Activated T-helper 1 cell treated with anti-CD3 and anti-CD28 coated beads, Interleukin-12 subunit alpha, Interleukin-12 subunit beta, Interleukin-2, Interleukin-4 antibody, amounts not matched to agents 30 ng/mL and 10 ng/mL and 1 ng/mL, durations not matched to agents 14 hours and 24 hours and 36 hours (primary cell): ENCODE measurements at regions of chr16 and their contacts with region 1.

Region 1: DNA sequence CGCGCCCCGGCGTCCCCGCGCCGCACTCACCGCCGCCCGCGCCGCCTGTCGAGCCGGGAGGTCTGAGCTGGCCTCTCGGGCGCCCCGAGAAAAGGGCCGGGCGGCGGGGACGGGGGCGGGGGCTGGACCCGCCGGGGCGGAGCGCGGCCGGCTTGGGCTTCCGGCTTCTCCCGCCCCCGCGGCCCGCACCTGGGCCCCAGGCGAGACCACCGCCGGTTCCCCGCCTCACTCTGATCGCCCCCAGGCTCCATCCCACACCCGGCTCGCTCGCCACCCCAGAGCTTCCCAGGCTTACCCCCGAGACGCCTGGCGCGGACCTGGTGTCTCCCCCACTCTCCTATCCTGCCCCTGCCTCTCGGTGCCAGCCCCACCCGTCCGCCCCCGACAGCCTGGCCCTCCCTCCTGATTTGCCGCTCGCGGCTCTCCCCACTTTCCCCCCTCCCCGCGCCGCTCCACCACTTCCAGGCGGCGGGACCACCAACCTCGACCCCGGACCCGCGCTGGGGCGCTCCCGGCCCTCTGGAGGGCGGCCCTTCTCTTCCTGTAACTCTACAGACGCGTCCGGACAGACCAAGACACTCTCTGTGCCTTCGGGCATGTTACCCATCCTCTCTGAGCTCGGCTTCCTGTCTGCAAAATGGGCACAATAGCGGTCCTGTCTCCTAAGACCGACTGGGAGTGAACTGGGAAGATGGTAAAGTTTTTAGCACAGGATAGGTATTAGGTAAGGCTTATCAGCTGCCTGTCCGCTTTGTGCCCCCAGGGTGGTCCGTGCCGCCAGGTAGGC is at the start of gene LITAF:
- DNase-seq: peak; percentile 45
- H3K4me3 Mint-ChIP-seq: peak within 1 kb of the TSS; percentile 93
- H3K27ac Mint-ChIP-seq: peak within 1 kb of the TSS; percentile 92
- H3K4me1 Mint-ChIP-seq: peaks cover 38% of the 10 kb centered on the region
- H3K27me3 Mint-ChIP-seq: no peaks in the 10 kb centered on the region
- total RNA-seq, gene LITAF: 197 and 199 TPM in 2 replicates

Region 2: DNA sequence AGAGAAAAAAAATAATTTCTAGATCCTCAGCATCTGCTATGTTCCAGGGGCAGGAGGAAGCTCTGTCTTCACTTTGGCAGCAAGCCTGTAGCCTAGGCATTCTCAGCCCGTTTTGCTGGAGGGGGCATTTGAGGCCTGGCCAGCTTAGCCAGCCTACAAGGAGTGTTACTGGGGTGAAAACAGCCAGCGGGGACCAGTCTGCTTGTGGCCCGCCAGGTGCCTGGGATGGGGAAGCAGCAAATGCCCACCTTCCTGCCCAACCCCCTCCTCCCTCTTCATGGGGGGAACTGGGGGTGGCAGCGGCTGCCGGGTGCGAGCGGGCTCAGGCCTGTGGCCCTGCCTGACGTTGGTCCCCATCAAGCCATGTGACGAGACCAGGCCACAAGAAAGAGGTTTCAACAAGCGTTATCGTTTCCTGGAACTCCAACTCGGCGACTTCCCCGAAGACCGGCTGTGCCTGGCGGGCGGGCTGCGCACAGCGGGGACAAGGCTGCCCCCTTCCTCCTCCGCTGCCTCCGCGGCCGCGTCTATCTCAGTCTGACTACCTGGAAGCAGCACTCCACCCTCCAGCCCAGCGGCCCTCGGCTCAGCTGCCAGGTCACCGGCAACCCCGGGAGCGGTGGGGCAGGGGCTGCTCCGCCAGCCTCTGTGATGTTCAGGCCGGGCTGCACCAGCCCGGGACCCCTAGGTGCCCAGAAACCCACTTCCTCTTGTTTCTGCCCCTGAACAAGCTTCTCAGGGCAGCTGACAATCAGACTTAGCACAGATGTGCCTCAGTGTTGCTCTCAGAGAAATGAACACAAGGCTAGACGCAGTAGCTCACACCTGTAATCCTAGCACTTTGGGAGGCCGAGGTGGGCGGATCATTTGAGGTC is 354.0 kb before region 1 on chr16:
- intact Hi-C with region 1: loop called (anchors 5 kb)
- DNase-seq: peak; percentile 91
- H3K4me3 Mint-ChIP-seq: peak overlapping the region; percentile 59
- H3K27ac Mint-ChIP-seq: peak overlapping the region; percentile 95
- H3K4me1 Mint-ChIP-seq: peaks cover 89% of the 10 kb centered on the region
- H3K27me3 Mint-ChIP-seq: no peaks in the 10 kb centered on the region

Region 3: DNA sequence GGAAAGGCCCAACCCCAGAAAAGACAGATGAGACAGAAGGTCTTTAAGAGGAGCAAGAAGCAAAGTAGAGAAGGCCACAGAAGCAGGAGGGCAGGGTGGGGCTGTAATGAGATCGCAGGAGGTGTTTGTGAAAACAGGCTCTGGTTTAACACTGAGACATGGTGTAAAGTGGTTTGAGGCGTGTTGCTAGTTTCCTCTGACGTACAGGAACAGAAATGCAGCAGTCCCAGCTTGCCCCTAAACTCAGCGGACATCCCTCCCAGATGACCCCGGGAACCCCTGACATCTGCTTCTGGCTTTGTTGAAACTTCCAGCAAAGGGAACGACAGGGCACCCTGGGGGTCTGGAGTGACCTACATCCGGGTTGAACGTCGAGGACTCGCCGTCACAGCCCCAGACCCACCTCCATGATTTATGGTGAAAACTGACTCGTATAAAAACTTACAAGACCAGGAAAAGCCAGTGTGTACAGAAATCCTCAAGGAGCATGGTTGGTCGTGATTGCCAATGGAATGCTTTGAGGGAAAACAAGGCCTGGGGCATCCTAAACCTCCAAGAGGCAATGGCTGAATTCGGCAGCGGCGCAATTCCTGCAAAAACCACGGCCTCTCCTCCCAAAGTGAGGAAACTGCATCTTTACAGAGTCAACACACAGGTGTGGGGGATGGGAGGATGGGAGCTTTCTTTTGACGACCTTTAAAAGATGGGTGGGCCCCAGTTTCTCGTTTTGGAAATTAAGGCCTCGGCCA is 26.2 kb before region 1 on chr16:
- intact Hi-C with region 1: loop called (anchors 1 kb)
- DNase-seq: peak; percentile 66
- H3K4me3 Mint-ChIP-seq: peak overlapping the region; percentile 81
- H3K27ac Mint-ChIP-seq: peak overlapping the region; percentile 95
- H3K4me1 Mint-ChIP-seq: peaks cover 79% of the 10 kb centered on the region
- H3K27me3 Mint-ChIP-seq: no peaks in the 10 kb centered on the region

Region 4: GRCh38 chr16:11667824-11668622 is 81.0 kb after region 1 on chr16 and contains the start of gene SNN:
- intact Hi-C with region 1: loop called (anchors 1 kb)
- DNase-seq: peak; percentile 85
- H3K4me3 Mint-ChIP-seq: peak within 1 kb of the TSS; percentile 80
- H3K27ac Mint-ChIP-seq: no peak within 1 kb of the TSS
- H3K4me1 Mint-ChIP-seq: peaks cover 66% of the 10 kb centered on the region
- H3K27me3 Mint-ChIP-seq: no peaks in the 10 kb centered on the region
- total RNA-seq, gene SNN: 7.3 and 7.9 TPM in 2 replicates

Region 5: DNA sequence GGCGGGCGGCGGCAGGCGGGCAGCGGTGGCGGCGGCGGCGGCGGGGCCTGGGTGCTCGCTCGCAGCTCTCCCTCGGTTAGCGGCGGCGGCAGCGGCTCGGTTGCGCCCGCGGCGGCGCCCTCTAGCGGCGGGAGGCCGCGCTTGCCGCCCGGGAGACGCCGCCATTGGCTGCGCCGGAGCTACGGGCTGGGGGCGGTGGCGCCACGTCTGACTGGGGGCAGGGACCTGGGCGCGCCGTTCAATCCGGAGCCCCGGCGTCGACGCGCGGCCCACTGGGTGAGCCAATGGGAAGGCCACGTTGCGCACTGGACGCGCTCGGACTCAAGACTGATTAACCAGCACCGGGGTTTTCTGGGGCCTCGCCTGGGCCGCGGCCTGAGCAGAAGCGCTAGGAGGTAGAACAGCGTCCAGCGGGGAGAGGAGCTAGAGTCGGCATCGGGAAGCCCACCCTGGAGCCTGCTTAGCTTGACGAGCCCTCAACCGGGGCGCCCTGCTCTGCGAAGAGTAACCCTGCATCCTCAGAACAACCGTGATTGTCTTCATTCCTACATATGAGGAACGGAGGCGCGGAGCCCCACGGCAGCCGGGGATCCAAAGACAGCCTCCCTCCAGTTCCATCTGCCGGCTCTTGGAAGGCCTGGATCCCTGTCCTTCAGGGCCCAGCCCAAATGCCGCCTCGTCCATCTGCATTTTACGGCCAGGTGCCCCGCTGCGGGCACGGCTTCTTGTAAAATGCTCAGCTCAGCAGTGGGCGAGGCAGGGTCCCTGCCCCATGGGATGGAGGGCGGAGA is 210.3 kb after region 1 on chr16 and contains the start of gene ZC3H7A:
- intact Hi-C with region 1: loop called (anchors 2 kb)
- DNase-seq: peak; percentile 95
- H3K4me3 Mint-ChIP-seq: peak within 1 kb of the TSS; percentile 92
- H3K27ac Mint-ChIP-seq: peak within 1 kb of the TSS; percentile 94
- H3K4me1 Mint-ChIP-seq: peaks cover 75% of the 10 kb centered on the region
- H3K27me3 Mint-ChIP-seq: no peaks in the 10 kb centered on the region
- total RNA-seq, gene ZC3H7A: 71.0 and 78.9 TPM in 2 replicates